Lower leg skin (tissue), 4 donors: ENCODE measurements at regions of chrX and their contacts with region 1.

Region 1: GRCh38 chrX:18938710-18939109 is 45.2 kb downstream of the PHKA2 start:
- DNase-seq: no peak
- H3K4me3 ChIP-seq: no peak overlapping the region
- CTCF ChIP-seq: no peak
- POLR2A ChIP-seq: no peak

Region 2: DNA sequence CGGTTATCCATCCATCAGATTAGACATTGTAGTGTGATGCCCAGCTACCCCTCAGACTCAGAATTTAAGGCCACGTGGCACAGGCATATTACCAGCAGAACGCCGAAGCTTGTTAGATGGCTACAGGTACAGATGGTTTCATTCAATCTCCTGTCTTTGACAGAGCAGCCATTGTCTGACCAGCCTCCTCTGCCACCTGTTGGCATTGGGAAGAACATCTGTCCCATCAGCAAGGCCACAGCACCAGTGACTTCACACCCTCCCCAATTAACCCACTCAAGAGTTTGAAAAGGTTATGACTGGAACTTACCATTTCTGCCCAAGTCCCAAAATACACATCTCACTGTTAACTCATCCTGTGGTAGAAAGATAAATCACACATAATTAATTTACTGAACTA is 67.2 kb after region 1 on chrX:
- intact Hi-C with region 1: loop called (anchors 2 kb)
- DNase-seq: no peak
- H3K4me3 ChIP-seq: no peak overlapping the region
- CTCF ChIP-seq: no peak
- POLR2A ChIP-seq: no peak

Region 3: DNA sequence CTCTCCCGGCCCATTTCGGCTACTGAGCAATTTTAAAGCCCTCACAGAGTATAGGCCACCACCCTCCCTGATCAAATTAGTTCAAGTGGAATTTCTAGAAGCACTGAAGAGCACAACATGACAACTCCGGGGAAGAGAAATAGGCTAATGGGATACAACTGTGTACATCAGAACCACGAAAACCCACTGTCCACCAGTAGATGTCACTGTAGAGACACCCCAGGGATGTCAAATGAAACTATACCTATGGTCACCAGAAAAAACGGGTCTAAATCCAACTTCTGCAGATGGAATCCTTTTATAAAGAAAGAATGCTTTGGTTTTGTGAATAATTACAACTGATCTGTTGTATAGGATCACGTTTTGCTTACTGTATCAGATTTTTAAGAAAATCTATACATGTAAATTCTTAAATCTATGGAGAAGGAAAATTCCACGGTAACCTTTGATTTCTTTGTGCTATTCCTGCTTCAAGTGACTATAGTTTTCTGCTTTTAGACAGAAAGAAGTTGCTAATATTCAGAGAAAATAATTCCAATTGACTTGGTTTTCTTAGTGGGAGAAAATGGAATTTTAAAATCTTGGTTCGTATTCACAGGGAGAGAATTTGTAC is 606.1 kb after region 1 on chrX:
- intact Hi-C with region 1: no loop called
- DNase-seq: peak; percentile 15 to 36
- H3K4me3 ChIP-seq: no peak overlapping the region
- CTCF ChIP-seq: no peak
- POLR2A ChIP-seq: no peak